ENCODE measurements at regions of chr1 and their contacts with region 1.

Region 1: DNA sequence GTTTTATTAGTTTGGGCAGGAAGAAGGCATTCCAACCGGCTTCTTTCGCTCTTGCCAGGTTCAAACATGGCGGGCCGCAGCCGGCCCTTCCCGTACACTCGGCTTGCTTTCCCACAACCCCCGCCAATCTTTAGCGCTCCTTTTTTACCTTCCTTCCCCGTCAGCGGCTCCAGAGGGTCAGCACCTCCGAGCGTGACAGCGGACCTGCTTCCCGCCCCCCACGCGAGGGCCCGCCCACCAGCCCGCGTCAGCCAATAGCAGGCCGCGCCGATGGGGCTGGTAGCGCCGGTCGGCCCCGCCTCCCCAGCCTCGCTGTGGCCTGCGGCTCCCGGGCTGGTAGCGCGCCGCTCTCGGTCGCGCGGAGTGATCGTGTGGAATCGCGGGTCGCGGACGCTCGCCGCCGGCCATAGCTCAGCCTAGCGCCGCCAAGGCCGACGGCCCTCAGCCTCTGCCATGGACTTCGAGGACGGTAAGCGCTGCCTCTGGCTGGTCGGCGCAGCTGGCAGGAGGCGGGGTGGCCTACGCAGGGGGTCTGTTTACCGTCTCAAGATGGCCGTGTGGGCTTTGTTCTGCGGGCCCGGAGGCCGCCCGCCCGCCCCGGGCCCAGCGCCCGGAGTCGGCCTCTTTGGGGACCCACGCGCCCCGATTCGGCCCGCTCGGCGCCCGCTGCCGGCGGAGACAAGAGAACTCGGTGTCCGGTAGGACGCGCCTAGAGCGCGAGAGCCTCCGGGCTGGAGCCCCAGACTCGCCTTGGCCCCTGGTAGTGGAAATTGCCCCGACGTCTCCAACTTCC is at the start of gene ZNF326:
- DNase-seq: peak; percentile 92
- H3K4me3 Mint-ChIP-seq: peak within 1 kb of the TSS; percentile 98
- H3K27ac Mint-ChIP-seq: peak within 1 kb of the TSS; percentile 98
- H3K4me1 Mint-ChIP-seq: peaks cover 41% of the 10 kb centered on the region
- H3K27me3 Mint-ChIP-seq: peaks cover 5% of the 10 kb centered on the region
- total RNA-seq, gene ZNF326: 32.8 and 33.1 TPM in 2 replicates

Region 2: GRCh38 chr1:88891318-88891950 is 1103.6 kb before region 1 on chr1 and contains the start of gene GTF2B:
- intact Hi-C with region 1: loop called (anchors 5 kb)
- DNase-seq: peak; percentile 93
- H3K4me3 Mint-ChIP-seq: peak within 1 kb of the TSS; percentile 97
- H3K27ac Mint-ChIP-seq: peak within 1 kb of the TSS; percentile 96
- H3K4me1 Mint-ChIP-seq: peaks cover 37% of the 10 kb centered on the region
- H3K27me3 Mint-ChIP-seq: peaks cover 2% of the 10 kb centered on the region
- total RNA-seq, gene GTF2B: 37.6 and 42.2 TPM in 2 replicates

Region 3: GRCh38 chr1:89780721-89781120 is 214.3 kb before region 1 on chr1:
- intact Hi-C with region 1: loop called (anchors 2 kb)
- DNase-seq: no peak
- H3K4me3 Mint-ChIP-seq: peak overlapping the region; percentile 56
- H3K27ac Mint-ChIP-seq: peak overlapping the region; percentile 96
- H3K4me1 Mint-ChIP-seq: peaks cover 38% of the 10 kb centered on the region
- H3K27me3 Mint-ChIP-seq: no peaks in the 10 kb centered on the region

Region 4: DNA sequence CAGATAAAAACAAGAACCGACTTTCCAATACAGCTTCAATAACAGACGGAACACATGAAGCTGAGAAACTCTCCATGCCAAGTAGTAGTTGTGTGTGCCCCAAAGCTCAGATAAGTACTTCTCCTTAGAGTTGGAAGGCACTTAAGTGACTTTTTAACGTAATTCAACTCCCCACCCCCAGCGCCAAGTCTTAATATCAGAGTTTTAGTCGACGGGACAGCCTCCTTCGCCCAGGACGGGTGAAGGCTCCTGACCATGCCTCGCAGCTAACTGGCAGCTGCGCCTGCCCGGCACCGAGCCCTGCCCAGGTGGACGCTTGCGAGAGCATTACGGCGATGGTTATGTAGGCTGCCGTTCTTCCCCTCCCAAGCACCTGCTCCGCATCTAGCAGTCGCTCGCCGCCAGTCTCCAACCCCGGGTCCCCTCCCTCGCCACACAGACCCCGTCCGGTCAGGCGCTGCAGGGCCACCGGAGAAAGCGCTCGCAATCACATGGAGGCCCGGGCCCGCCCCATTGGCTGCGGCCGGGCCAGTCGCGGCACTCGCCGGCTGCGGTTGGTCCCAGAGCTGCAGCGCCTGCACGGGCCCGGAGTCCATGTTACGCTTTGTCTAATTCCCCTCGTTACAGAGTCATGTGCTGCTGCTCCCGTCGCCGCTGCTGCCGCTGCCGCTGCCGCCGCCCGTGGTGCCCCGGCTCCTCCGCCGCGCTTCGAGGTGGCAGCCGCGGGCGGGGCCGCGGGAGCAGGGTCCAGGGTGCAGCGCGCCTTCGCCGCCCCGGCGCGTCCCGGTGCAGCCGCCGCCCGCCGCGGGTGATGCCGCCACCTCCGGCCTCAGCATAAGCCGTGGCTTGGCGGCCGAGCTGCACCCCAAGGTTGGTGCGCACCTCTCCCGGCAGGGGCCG is 174.3 kb before region 1 on chr1 and contains the start of gene LRRC8D:
- intact Hi-C with region 1: loop called (anchors 2 kb)
- DNase-seq: peak; percentile 66
- H3K4me3 Mint-ChIP-seq: peak within 1 kb of the TSS; percentile 84
- H3K27ac Mint-ChIP-seq: peak within 1 kb of the TSS; percentile 66
- H3K4me1 Mint-ChIP-seq: peaks cover 23% of the 10 kb centered on the region
- H3K27me3 Mint-ChIP-seq: peaks cover 13% of the 10 kb centered on the region
- total RNA-seq, gene LRRC8D: 28.6 and 33.3 TPM in 2 replicates

Measured in activated T-helper 2 cell treated with anti-CD3 and anti-CD28 coated beads, Interferon-gamma antibody, Interleukin-2, Interleukin-4, amounts not matched to agents 10 μg/mL and 5 μg/mL and 100 μg/mL, durations not matched to agents 14 hours and 24 hours and 36 hours (primary cell).